ENCODE measurements at regions of chr14 and their contacts with region 1.

Region 1: DNA sequence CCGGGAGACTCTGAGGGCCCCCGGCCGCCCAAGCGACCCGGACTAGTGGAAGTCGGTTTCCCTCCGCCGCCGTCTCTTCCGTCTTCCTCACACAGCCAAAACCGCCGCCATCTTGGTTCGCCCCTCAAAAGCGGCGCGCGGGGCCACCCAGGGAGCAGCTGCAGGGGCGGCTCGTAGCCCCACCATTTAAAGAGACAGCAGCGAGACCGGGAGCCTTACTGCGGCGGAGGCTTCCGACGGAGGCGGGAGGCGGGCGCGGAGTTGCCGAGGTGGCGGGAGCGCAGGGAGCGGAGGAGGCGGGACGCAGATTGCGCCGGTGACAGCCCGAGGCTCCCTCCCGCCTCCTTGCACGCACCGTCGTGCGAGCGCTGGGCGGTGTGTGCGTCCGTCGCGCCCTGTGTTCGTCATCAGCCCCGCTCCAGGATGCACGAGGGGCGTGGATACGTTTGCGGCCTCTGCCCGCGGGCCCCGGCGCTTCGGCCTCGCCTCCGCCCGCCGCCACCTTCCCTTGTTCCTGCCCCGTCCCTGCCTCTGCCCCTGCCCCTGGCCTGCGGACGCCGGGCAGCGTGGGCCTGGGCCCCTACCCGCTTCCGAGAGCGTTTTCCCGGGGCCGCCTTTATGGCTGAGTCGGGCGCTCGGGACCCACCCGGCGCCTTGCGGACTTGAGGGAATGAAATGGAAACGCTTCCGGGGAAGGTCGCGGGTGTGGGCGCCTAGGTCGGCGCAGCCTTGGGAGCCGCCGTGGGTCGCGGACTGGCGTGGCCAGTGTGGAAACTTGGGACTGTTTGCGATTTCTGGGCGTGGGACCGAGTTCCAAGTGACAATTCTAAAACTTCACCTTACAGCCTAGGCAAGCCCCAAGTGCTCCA is at the start of gene PPP4R3A:
- DNase-seq: peak; percentile 97
- ATAC-seq: peak; percentile 88
- H3K4me3 Mint-ChIP-seq: peak within 1 kb of the TSS; percentile 96
- H3K27ac Mint-ChIP-seq: peak within 1 kb of the TSS; percentile 100
- H3K4me1 Mint-ChIP-seq: peaks cover 20% of the 10 kb centered on the region
- H3K27me3 Mint-ChIP-seq: no peaks in the 10 kb centered on the region
- total RNA-seq, gene PPP4R3A: 105 to 122 TPM

Region 2: GRCh38 chr14:90399541-90400444 is 1110.6 kb before region 1 on chr14:
- CTCF ChIA-PET with region 1: no interaction called
- POLR2A ChIA-PET with region 1: no interaction called
- intact Hi-C with region 1: loop called in 1 of 2 experiments (anchors 10 kb)
- DNase-seq: peak; percentile 93
- ATAC-seq: peak; percentile 62
- H3K4me3 Mint-ChIP-seq: peak overlapping the region; percentile 97
- H3K27ac Mint-ChIP-seq: peak overlapping the region; percentile 95
- H3K4me1 Mint-ChIP-seq: peaks cover 53% of the 10 kb centered on the region
- H3K27me3 Mint-ChIP-seq: no peaks in the 10 kb centered on the region

Region 3: DNA sequence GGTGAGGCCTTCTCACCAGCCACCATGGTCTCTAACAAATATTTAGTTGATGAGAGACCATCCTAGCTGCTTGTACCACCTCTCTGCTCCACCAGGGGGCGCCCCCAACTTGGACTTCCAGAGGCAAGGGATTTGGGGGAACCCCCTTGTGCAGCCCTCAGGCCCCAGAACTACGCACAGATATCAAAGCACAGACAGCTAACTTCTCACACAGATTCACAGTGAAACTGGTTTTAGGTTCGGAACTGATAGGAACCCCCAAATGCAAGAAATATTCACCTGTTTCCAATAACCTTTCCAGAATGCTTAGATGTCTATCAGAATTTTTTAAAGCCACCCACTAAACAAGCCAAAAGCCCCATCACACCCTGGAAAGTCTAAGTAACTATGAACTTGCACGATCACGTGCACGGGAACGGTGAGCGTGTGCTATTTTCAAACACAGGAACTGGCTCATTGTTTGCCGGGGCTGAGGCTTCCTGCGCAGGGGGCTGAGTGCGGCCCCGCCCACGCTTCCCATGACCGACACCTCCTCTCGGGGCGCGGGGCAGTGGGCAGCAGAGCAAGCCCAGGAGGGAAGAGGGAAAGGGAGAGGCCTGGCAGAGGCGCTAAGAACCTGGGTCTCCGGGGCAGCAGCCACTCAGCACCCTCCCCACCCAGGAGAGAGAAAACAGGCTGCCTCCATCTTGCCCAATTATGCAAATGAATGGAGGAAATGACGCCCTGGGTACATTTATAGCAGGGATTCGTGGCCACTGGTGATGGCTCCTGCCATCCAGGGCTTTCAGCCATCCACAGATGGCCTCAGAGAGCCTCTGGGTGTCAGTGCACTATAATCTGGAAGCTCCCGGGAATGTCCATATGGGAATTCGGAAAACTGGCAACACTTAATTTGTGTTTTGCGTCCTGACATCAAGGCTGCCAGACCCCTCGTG is 186.5 kb before region 1 on chr14:
- CTCF ChIA-PET with region 1: no interaction called
- POLR2A ChIA-PET with region 1: no interaction called
- intact Hi-C with region 1: loop called (anchors 1 to 5 kb)
- DNase-seq: peak; percentile 98
- ATAC-seq: peak; percentile 85
- H3K4me3 Mint-ChIP-seq: peak overlapping the region; percentile 74
- H3K27ac Mint-ChIP-seq: peak overlapping the region; percentile 100
- H3K4me1 Mint-ChIP-seq: peaks cover 83% of the 10 kb centered on the region
- H3K27me3 Mint-ChIP-seq: no peaks in the 10 kb centered on the region

Region 4: DNA sequence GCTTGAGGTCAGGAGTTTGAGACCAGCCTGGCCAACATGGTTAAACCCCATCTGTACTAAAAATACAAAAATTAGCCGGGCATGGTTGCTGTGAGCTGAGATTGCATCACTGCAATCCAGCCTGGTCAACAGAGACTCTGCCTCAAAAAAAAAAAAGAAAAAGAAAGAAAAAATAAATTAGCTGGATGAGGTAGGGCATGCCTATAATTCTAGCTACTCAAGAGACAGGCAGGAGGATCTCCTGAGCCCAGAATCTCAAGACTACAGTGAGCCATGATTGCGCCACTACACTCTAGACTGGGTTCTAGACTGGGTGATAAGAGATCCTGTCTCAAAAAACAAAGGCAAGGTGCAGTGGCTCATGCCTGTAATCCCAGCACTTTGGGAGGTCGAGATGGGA is 17.2 kb before region 1 on chr14:
- CTCF ChIA-PET with region 1: interaction called, 7 read pairs
- POLR2A ChIA-PET with region 1: interaction called, 4 read pairs
- intact Hi-C with region 1: loop called in 1 of 2 experiments (anchors 2 kb)
- DNase-seq: no peak
- ATAC-seq: no peak
- H3K4me3 Mint-ChIP-seq: no peak overlapping the region
- H3K27ac Mint-ChIP-seq: peak overlapping the region; percentile 55
- H3K4me1 Mint-ChIP-seq: peaks cover 62% of the 10 kb centered on the region
- H3K27me3 Mint-ChIP-seq: no peaks in the 10 kb centered on the region

Region 5: DNA sequence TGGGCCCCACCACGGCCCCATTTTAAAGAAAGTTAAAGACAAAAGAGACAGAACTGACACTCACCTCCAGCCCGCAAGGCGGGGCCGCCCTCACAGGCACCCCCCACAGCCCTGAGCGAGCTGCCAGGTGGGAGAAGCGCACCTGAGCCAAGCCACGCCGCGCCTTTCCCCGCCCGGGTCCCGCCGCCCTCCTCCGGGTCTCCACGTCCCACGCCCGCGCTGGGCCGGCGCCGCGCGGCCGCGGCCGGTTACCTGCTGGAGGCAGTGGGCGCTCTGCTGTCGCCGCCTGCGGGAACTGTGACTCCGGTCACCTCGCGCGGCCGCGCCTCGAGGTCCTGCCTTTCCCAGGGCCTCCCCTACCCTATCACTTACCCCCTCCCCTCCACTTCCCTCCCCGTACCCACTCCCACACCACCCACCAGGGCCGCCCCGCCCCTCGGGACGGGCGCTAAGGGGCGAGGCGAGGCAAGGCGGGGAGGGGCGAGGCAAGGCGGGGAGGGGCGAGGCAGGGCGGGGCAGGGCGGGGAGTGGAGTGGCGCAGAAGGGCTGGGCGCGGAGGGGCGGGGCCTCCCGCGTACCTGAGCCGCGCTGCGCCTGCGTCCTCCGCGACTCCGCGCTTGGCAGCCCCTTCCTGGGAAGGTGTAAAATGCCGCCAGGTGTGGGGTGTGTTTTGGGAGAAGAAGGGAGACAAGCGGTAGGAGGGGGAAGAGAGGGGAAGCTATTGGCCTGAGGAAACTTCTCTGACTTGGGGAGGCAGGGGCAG is 325.9 kb after region 1 on chr14:
- CTCF ChIA-PET with region 1: no interaction called
- POLR2A ChIA-PET with region 1: no interaction called
- intact Hi-C with region 1: loop called in 1 of 2 experiments (anchors 1 kb)
- DNase-seq: peak; percentile 97
- ATAC-seq: peak; percentile 97
- H3K4me3 Mint-ChIP-seq: peak overlapping the region; percentile 83
- H3K27ac Mint-ChIP-seq: peak overlapping the region; percentile 76
- H3K4me1 Mint-ChIP-seq: peaks cover 70% of the 10 kb centered on the region
- H3K27me3 Mint-ChIP-seq: no peaks in the 10 kb centered on the region

Region 6: DNA sequence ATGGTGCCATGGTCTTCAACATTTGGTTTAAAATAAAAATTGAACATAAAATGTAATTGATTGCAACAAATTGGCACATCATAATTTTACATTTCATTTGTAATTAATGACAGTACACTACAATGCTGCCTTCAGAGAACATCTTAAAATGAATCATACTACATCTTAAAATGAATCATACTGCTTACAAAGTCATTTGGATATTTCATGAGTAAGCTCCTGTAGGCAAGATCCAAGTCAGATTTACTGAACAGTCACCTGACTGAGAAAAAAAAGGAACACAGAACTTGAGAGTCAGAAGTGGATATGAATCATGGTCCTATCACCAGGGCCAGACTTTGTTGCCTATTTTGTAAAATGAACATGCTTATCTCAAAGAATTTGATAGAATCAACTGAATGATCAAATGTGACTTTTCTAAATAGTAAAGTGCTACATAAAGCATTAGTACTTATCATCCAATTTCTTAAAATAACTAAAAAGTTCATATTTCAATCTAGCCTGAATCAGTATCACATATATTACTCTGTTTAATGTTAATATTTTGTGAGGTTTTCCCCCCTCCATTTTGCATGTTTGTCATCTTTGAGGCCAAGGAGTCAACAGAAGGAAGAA is 469.8 kb after region 1 on chr14:
- CTCF ChIA-PET with region 1: no interaction called
- POLR2A ChIA-PET with region 1: no interaction called
- intact Hi-C with region 1: loop called in 1 of 2 experiments (anchors 1 kb)
- DNase-seq: peak; percentile 22
- ATAC-seq: peak; percentile 98
- H3K4me3 Mint-ChIP-seq: no peak overlapping the region
- H3K27ac Mint-ChIP-seq: peak overlapping the region; percentile 43
- H3K4me1 Mint-ChIP-seq: peaks cover 41% of the 10 kb centered on the region
- H3K27me3 Mint-ChIP-seq: no peaks in the 10 kb centered on the region

Region 7: GRCh38 chr14:92106143-92106926 is 595.9 kb after region 1 on chr14 and contains the start of gene ATXN3:
- CTCF ChIA-PET with region 1: no interaction called
- POLR2A ChIA-PET with region 1: no interaction called
- intact Hi-C with region 1: loop called in 1 of 2 experiments (anchors 1 kb)
- DNase-seq: peak; percentile 98
- ATAC-seq: peak; percentile 97
- H3K4me3 Mint-ChIP-seq: peak within 1 kb of the TSS; percentile 90
- H3K27ac Mint-ChIP-seq: peak within 1 kb of the TSS; percentile 92
- H3K4me1 Mint-ChIP-seq: peaks cover 42% of the 10 kb centered on the region
- H3K27me3 Mint-ChIP-seq: no peaks in the 10 kb centered on the region
- total RNA-seq, gene ATXN3: 32.7 to 36.0 TPM